Mammary epithelial cell (primary cell): ENCODE measurements at regions of chr12 and their contacts with region 1.

Region 1: DNA sequence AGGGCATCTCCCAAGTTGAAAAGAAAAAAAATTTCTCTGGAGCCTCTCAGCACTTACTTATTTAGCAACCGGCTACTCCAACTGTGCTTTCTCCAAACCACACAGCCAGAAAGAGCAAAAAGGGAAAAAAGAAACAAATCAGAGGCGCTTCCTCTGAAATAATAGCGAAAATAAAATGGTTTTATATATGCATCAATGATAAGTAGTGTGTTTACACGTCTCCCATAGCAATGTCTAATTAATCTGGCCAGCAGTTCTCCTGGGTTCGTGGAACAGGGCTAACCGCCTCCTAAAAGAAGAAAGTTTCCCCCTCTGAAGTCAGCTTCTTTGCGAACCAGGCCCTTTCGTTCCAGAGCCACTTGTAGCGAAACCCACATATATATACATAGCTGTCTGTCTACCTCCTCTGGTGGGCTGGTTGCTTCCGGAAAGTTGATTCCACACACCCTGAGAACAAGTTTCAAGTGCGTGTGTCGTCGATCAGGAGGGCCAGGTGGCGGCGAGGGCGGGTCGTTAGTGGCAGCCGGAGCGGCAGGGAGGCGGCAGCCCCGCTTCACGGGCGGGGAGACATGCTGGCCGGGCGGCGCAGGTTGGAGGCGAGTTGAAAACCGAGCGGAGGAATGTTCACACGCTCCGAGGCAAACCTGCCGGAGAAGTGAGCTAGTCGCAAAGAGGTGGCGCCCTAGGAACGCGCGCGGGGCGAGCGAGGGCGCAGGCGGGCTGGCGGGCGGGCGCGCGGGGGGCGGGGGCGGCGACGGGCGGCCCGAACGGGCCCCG is 2.7 kb downstream of the PTHLH start:
- DNase-seq: peak; percentile 95
- H3K4me3 ChIP-seq: peak overlapping the region; percentile 76 to 95 (median 91)
- H3K27ac ChIP-seq: peak overlapping the region; percentile 100
- H3K4me1 ChIP-seq: peaks cover 42% of the 10 kb centered on the region
- H3K27me3 ChIP-seq: no peaks in the 10 kb centered on the region
- CTCF ChIP-seq: peak in 1 of 2 donors; percentile 53

Region 2: GRCh38 chr12:28035500-28035899 is 65.7 kb after region 1 on chr12:
- CTCF ChIA-PET with region 1: no interaction called
- dilution Hi-C with region 1: no loop called
- in situ Hi-C with region 1: no loop called
- intact Hi-C with region 1: loop called (anchors 1 kb)
- DNase-seq: peak; percentile 78
- H3K4me3 ChIP-seq: no peak overlapping the region
- H3K27ac ChIP-seq: peak overlapping the region; percentile 100
- H3K4me1 ChIP-seq: peaks cover 40% of the 10 kb centered on the region
- H3K27me3 ChIP-seq: no peaks in the 10 kb centered on the region
- CTCF ChIP-seq: no peak

Region 3: GRCh38 chr12:28130625-28131598 is 161.1 kb after region 1 on chr12:
- CTCF ChIA-PET with region 1: no interaction called
- dilution Hi-C with region 1: loop called (anchors 5 kb)
- in situ Hi-C with region 1: no loop called
- intact Hi-C with region 1: loop called (anchors 1 kb)
- DNase-seq: peak; percentile 99
- H3K4me3 ChIP-seq: peak overlapping the region in 1 of 3 experiments; percentile 2
- H3K27ac ChIP-seq: peak overlapping the region; percentile 98
- H3K4me1 ChIP-seq: peaks cover 55% of the 10 kb centered on the region
- H3K27me3 ChIP-seq: no peaks in the 10 kb centered on the region
- CTCF ChIP-seq: no peak

Region 4: GRCh38 chr12:28190321-28191050 is 220.7 kb after region 1 on chr12 and contains the start of gene CCDC91:
- CTCF ChIA-PET with region 1: no interaction called
- dilution Hi-C with region 1: loop called (anchors 5 kb)
- in situ Hi-C with region 1: no loop called
- intact Hi-C with region 1: loop called (anchors 5 kb)
- DNase-seq: peak; percentile 86
- H3K4me3 ChIP-seq: peak within 1 kb of the TSS; percentile 72 to 93 (median 88)
- H3K27ac ChIP-seq: peak within 1 kb of the TSS; percentile 96
- H3K4me1 ChIP-seq: peaks cover 16% of the 10 kb centered on the region
- H3K27me3 ChIP-seq: no peaks in the 10 kb centered on the region
- CTCF ChIP-seq: no peak
- total RNA-seq, gene CCDC91: 20.8 to 22.7 TPM

Region 5: DNA sequence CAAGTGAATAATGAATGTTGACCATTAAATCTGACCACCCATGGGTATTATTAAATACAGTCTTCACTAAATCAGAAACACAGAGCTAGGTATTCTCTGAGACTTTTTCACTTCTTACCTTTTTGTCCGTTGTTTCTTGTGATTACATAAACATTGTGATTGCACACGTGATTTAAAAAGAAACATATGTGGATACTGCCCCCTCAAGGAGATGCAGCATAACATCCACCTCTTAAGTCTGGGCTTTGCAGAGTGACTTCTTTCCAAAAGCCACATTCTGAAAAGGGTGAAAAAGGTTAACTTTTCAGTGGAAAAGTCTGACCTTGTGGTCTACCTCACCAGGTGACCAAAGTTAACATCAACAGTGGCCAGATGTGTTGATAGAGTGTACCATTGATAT is 993.7 kb after region 1 on chr12:
- CTCF ChIA-PET with region 1: no interaction called
- dilution Hi-C with region 1: no loop called
- in situ Hi-C with region 1: no loop called
- intact Hi-C with region 1: loop called (anchors 2 kb)
- DNase-seq: peak; percentile 54
- H3K4me3 ChIP-seq: no peak overlapping the region
- H3K27ac ChIP-seq: no peak overlapping the region
- H3K4me1 ChIP-seq: peaks cover 7% of the 10 kb centered on the region
- H3K27me3 ChIP-seq: no peaks in the 10 kb centered on the region
- CTCF ChIP-seq: peak; percentile 66 to 68